ENCODE measurements at regions of chr1 and their contacts with region 1.

Region 1: GRCh38 chr1:209565759-209566678 is 17.5 kb upstream of the CAMK1G start:
- DNase-seq: peak; percentile 65 to 78 (median 68)
- ATAC-seq: peak; percentile 59 to 90 (median 81)
- H3K4me3 ChIP-seq: no peak overlapping the region
- H3K27ac ChIP-seq: no peak overlapping the region
- H3K4me1 ChIP-seq: peaks cover 0 to 5% (median 0%) of the 10 kb centered on the region in 12 donors
- H3K27me3 ChIP-seq: peaks cover 0 to 9% (median 0%) of the 10 kb centered on the region in 9 donors
- CTCF ChIP-seq: peak; percentile 59 to 84 (median 71)
- POLR2A ChIP-seq: no peak

Region 2: GRCh38 chr1:208652296-208653160 is 913.5 kb before region 1 on chr1:
- intact Hi-C with region 1: loop called in 1 of 10 experiments (anchors 10 kb)
- DNase-seq: peak in 4 of 5 donors; percentile 28 to 46 (median 36)
- ATAC-seq: peak in 3 of 4 donors; percentile 80 to 93 (median 82)
- H3K4me3 ChIP-seq: no peak overlapping the region
- H3K27ac ChIP-seq: no peak overlapping the region
- H3K4me1 ChIP-seq: peaks cover 0 to 12% (median 0%) of the 10 kb centered on the region in 12 donors
- H3K27me3 ChIP-seq: peaks cover 0 to 17% (median 0%) of the 10 kb centered on the region in 9 donors
- CTCF ChIP-seq: peak; percentile 73 to 91 (median 86)
- POLR2A ChIP-seq: no peak

Region 3: DNA sequence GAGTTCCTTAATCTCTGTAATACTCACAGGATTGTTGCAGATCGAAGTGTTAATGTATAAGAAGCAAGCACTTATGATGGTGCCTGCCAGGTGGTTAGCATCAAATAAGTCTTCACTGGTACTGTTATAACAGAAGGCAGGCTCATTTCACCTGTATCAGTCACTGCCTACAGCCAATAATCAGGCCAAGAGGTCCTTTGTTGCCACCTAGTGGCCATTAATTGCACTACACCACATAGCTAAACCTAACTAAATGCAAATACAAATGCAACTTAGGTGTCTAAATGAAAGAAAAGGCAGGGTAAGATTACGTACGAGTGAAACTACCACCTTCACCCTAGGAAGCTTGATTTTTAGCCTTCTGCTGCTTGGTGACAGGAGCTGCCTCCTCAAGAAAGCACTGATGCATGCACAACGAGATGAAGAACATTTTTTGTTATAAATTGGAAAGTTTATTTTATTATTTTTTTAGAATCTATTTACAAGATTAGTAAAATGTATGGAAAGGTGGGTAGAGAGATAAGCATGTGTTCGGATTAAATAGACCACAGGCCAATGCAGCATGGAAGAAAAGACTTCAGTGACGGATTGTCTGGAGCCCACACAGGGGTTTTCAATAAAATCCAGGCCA is 317.3 kb before region 1 on chr1:
- intact Hi-C with region 1: loop called in 1 of 10 experiments (anchors 5 kb)
- DNase-seq: peak in 1 of 5 donors; percentile 34
- ATAC-seq: peak in 3 of 4 donors; percentile 54 to 61 (median 55)
- H3K4me3 ChIP-seq: no peak overlapping the region
- H3K27ac ChIP-seq: no peak overlapping the region
- H3K4me1 ChIP-seq: no peaks in the 10 kb centered on the region
- H3K27me3 ChIP-seq: peaks cover 0 to 8% (median 0%) of the 10 kb centered on the region in 9 donors
- CTCF ChIP-seq: peak; percentile 83 to 98 (median 93)
- POLR2A ChIP-seq: no peak

Region 4: DNA sequence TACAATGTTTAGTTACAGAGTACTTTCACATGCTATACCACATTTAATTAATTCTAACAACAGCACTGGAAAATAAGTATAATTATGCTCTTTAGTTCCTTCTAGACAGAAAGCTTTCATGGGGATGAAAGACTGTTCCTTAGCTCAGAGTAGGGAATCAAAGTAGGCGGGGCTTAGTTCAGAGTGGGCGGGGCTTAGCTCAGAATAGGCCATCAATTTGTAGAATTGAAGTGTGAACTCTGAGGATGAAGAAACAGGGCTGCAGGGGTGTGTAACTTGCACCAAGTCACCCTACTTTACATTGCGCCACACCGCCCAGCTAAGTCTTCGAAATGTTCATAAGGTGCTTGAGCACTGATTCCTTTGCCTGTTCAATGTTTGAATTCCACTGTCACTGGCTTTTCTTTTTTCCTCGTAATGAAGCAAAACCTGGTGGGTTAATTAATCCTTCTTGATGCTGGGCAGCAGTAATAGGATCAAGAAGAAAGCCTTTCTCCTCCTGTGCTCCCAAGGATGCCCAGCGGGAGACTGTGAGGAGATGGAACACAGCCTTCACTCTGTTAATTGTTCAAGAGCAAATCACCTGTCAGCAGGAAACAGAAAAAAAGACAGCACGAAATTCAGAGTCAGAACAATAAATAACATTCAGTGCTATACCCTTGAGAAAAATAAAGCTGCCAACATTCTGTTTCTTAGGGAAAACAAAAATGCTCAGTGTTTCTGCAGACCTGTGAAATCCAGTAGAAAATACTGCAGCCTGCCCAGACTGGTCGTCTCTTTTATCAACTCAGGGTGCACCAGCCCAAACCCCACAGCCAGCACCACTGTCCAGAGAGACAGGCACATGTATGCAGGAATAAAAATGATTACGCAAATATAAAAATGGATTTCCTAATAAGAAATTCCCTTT is 49.0 kb before region 1 on chr1:
- intact Hi-C with region 1: loop called in 1 of 10 experiments (anchors 5 kb)
- DNase-seq: no peak
- ATAC-seq: no peak
- H3K4me3 ChIP-seq: no peak overlapping the region
- H3K27ac ChIP-seq: no peak overlapping the region
- H3K4me1 ChIP-seq: no peaks in the 10 kb centered on the region
- H3K27me3 ChIP-seq: peaks cover 0 to 8% (median 0%) of the 10 kb centered on the region in 9 donors
- CTCF ChIP-seq: no peak
- POLR2A ChIP-seq: no peak

Region 5: DNA sequence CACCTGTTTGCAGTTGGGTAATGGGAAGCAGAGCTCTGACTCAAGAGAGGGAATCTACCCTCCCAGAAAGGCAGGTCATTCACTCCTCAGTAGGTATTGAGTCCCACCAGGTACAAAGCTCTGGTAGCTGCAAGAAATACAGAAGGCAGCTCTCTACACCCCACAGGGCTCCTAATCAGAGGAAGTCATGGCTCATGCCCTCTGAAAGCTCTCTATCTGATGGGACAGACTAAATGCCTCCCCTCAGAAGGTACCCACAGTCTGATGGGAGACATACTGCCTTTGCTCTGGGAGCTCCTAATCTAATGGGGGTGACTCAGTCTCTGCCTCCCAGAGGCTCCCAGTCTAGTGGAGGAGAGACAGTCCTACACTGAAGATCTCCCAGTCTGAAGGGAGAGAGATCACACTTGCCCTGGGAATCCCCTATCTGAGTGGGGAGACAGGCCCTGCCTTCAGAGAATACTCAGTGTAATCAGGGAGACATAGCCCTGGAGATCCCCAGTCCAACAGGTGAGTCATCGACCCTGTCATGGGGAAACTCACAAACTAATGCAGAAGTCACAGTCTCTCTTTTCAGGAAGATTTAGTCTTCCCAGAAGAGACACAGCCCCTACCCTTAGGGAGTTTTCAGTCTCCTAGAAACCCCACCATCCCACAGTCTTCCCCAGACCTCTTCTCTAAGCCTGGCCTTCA is 41.2 kb after region 1 on chr1:
- intact Hi-C with region 1: no loop called
- DNase-seq: no peak
- ATAC-seq: no peak
- H3K4me3 ChIP-seq: no peak overlapping the region
- H3K27ac ChIP-seq: no peak overlapping the region
- H3K4me1 ChIP-seq: no peaks in the 10 kb centered on the region
- H3K27me3 ChIP-seq: no peaks in the 10 kb centered on the region
- CTCF ChIP-seq: no peak
- POLR2A ChIP-seq: no peak

Region 6: GRCh38 chr1:209989525-209989924 is 423.5 kb after region 1 on chr1:
- intact Hi-C with region 1: loop called in 4 of 10 experiments (anchors 10 kb)
- DNase-seq: no peak
- ATAC-seq: no peak
- H3K4me3 ChIP-seq: no peak overlapping the region
- H3K27ac ChIP-seq: no peak overlapping the region
- H3K4me1 ChIP-seq: no peaks in the 10 kb centered on the region
- H3K27me3 ChIP-seq: peaks cover 0 to 17% (median 0%) of the 10 kb centered on the region in 9 donors
- CTCF ChIP-seq: peak in 11 of 12 donors; percentile 9 to 49 (median 34)
- POLR2A ChIP-seq: no peak

Measured in heart left ventricle (tissue), 16 donors.